ENCODE measurements at regions of chr3 and their contacts with region 1.

Region 1: DNA sequence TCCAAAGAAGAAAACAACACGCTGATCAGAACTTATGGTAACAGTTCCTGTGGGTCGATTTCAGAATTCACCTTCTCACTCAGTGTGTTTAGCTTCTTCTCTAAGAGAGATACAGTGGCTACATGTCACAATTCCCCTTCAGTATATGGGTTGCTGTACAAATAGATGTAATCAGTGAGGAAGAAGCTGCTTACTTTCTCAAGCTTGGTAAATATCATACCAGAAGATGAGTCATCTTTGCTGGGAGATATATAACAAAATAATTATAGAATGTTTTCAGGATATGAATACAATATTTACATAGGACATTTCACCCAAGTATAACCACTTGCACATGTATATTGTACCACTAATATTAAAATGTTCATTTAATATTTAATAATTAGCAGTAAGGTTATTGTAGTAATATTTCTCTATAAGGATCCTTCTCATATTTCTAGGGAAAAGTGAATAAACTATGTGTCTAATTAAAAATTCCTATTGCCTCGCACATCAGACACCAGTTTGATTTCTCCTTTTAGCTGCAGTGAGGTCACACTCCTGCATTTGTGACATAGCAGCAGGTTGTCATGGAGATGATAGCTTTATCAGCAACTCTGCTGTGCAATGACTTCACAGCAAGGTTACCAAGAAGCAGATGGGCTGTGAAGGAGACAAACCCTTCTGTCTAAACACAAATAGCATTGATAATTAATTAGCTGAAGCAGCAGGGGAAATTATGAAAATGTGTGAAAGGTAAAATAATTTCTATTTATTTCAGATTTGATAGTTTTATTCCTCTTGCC is 211.4 kb downstream of the TUSC7 start:
- DNase-seq: no peak
- H3K4me3 ChIP-seq: no peak overlapping the region
- H3K27ac ChIP-seq: no peak overlapping the region
- H3K4me1 ChIP-seq: no peaks in the 10 kb centered on the region
- H3K27me3 ChIP-seq: no peaks in the 10 kb centered on the region
- CTCF ChIP-seq: no peak
- POLR2A ChIP-seq: no peak

Region 2: GRCh38 chr3:116579840-116580239 is 341.2 kb before region 1 on chr3:
- intact Hi-C with region 1: no loop called
- DNase-seq: no peak
- H3K4me3 ChIP-seq: no peak overlapping the region
- H3K27ac ChIP-seq: no peak overlapping the region
- H3K4me1 ChIP-seq: no peaks in the 10 kb centered on the region
- H3K27me3 ChIP-seq: no peaks in the 10 kb centered on the region
- CTCF ChIP-seq: no peak
- POLR2A ChIP-seq: no peak

Region 3: GRCh38 chr3:116678853-116679252 is 242.2 kb before region 1 on chr3:
- intact Hi-C with region 1: no loop called
- DNase-seq: no peak
- H3K4me3 ChIP-seq: no peak overlapping the region
- H3K27ac ChIP-seq: no peak overlapping the region
- H3K4me1 ChIP-seq: no peaks in the 10 kb centered on the region
- H3K27me3 ChIP-seq: no peaks in the 10 kb centered on the region
- CTCF ChIP-seq: no peak
- POLR2A ChIP-seq: no peak

Region 4: GRCh38 chr3:116849261-116849688 is 71.7 kb before region 1 on chr3:
- intact Hi-C with region 1: no loop called
- DNase-seq: no peak
- H3K4me3 ChIP-seq: no peak overlapping the region
- H3K27ac ChIP-seq: no peak overlapping the region
- H3K4me1 ChIP-seq: no peaks in the 10 kb centered on the region
- H3K27me3 ChIP-seq: no peaks in the 10 kb centered on the region
- CTCF ChIP-seq: no peak
- POLR2A ChIP-seq: no peak

Region 5: DNA sequence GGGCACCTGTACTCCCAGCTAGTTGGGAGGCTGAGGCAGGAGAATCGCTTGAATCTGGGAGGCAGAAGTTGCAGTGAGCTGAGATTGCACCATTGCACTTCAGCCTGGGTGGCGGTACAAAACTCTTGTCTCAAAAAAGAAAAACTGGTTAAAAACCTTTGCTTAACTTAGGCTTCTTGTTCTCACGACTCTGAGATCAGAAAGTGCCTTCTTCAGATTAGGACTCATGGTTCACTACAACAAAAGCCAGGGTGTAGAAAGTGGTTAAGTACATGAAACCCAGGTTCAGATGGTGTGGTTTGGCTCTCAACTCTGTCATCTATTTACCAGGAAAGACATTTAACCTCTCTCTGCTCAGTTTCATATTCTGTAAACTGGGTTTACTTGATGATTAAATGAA is 43.0 kb before region 1 on chr3:
- intact Hi-C with region 1: loop called in 1 of 2 experiments (anchors 10 kb)
- DNase-seq: no peak
- H3K4me3 ChIP-seq: no peak overlapping the region
- H3K27ac ChIP-seq: no peak overlapping the region
- H3K4me1 ChIP-seq: no peaks in the 10 kb centered on the region
- H3K27me3 ChIP-seq: no peaks in the 10 kb centered on the region
- CTCF ChIP-seq: no peak
- POLR2A ChIP-seq: no peak

Measured in adrenal gland (tissue), 19 donors.